Head of caudate nucleus (tissue), 42 donors: ENCODE measurements at regions of chr9 and their contacts with region 1.

Region 1: DNA sequence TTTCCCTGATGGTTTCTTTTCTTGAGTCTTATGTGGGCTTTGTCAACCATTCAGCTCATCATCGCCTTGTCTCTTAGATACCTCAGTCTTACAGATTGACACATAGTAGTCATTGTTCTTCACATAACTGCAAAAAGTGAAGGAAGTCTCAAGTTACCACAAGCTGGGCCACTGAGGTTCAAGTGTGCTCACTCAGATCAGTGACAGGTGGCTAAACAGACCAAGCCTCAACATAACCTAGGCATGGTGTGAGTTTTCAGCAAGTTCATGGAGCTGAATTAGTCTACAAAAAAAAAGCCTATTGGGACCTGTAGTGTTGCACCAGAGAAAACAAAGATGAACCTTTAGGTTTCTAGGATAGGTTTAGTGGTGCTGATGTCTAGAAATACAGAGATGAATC is 58.2 kb downstream of the RFK start:
- DNase-seq: no peak

Region 2: GRCh38 chr9:75358846-75359245 is 977.2 kb before region 1 on chr9:
- intact Hi-C with region 1: loop called (anchors 10 kb)
- DNase-seq: no peak